WTC11 (cell line): ENCODE measurements at regions of chr10 and their contacts with region 1.

Region 1: GRCh38 chr10:133127291-133128194 is 32.5 kb upstream of the KNDC1 start:
- DNase-seq: peak; percentile 80
- ATAC-seq: peak; percentile 62
- H3K4me3 Mint-ChIP-seq: no peak overlapping the region
- H3K27ac Mint-ChIP-seq: no peak overlapping the region
- H3K4me1 Mint-ChIP-seq: no peaks in the 10 kb centered on the region
- H3K27me3 Mint-ChIP-seq: no peaks in the 10 kb centered on the region
- CTCF ChIP-seq: no peak

Region 2: GRCh38 chr10:132938472-132939329 is 188.8 kb before region 1 on chr10:
- CTCF ChIA-PET with region 1: interaction called, 11 read pairs
- POLR2A ChIA-PET with region 1: no interaction called
- DNase-seq: peak; percentile 78
- ATAC-seq: peak; percentile 90
- H3K4me3 Mint-ChIP-seq: no peak overlapping the region
- H3K27ac Mint-ChIP-seq: peak overlapping the region; percentile 54
- H3K4me1 Mint-ChIP-seq: peaks cover 3% of the 10 kb centered on the region; the same call in 1 of the 2 replicates
- H3K27me3 Mint-ChIP-seq: peaks cover 3% of the 10 kb centered on the region; the same call in 1 of the 2 replicates
- CTCF ChIP-seq: no peak; the same call in 1 of the 2 replicates

Region 3: GRCh38 chr10:133009222-133009954 is 118.2 kb before region 1 on chr10:
- CTCF ChIA-PET with region 1: no interaction called
- POLR2A ChIA-PET with region 1: no interaction called
- DNase-seq: no peak
- ATAC-seq: no peak
- H3K4me3 Mint-ChIP-seq: no peak overlapping the region
- H3K27ac Mint-ChIP-seq: no peak overlapping the region
- H3K4me1 Mint-ChIP-seq: no peaks in the 10 kb centered on the region
- H3K27me3 Mint-ChIP-seq: no peaks in the 10 kb centered on the region
- CTCF ChIP-seq: no peak